MCF 10A (cell line): ENCODE measurements at regions of chr11 and their contacts with region 1.

Region 1: GRCh38 chr11:128506999-128507611 is 80.3 kb downstream of the ETS1 start:
- DNase-seq: peak; percentile 88
- H3K4me3 Mint-ChIP-seq: peak overlapping the region; percentile 64
- H3K27ac Mint-ChIP-seq: peak overlapping the region; percentile 89
- H3K4me1 Mint-ChIP-seq: peaks cover 69% of the 10 kb centered on the region
- H3K27me3 Mint-ChIP-seq: no peaks in the 10 kb centered on the region
- CTCF ChIP-seq: no peak

Region 2: DNA sequence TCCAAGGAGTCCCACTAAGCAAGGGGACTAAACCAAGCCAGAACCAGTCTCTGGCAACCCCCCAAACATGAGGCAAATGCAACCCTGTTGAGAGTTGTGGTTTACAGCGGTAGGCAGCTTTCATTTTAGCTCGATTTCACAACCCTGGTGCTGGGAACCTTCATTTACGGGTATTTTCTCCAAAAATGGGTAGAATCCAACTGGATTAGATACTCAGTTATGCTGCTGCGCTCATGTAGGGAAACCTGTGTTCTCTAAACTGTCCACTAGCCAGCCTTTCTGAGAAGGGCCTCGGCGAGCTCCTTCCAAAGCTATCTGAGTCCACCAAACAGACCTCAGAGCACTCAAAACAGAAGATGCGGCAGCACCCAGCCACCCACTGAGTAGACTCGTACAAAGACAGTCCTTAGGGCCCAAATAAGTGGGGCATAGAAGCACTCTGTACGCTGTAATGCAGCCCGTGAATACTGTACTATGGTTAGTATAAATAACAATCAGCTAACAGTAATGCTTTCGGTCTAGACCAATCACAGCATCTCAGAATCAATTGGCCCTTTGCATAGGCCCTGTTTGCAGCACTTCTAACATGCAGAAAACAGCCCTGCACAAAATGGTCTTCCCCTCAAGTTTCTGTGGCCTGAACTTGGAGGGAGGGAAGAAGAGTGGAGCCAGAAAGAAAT is 24.5 kb before region 1 on chr11:
- CTCF ChIA-PET with region 1: interaction called, 21 read pairs
- POLR2A ChIA-PET with region 1: interaction called, 5 read pairs
- intact Hi-C with region 1: no loop called
- DNase-seq: peak; percentile 78
- H3K4me3 Mint-ChIP-seq: peak overlapping the region; percentile 44
- H3K27ac Mint-ChIP-seq: peak overlapping the region; percentile 71
- H3K4me1 Mint-ChIP-seq: peaks cover 39% of the 10 kb centered on the region
- H3K27me3 Mint-ChIP-seq: no peaks in the 10 kb centered on the region
- CTCF ChIP-seq: no peak

Region 3: DNA sequence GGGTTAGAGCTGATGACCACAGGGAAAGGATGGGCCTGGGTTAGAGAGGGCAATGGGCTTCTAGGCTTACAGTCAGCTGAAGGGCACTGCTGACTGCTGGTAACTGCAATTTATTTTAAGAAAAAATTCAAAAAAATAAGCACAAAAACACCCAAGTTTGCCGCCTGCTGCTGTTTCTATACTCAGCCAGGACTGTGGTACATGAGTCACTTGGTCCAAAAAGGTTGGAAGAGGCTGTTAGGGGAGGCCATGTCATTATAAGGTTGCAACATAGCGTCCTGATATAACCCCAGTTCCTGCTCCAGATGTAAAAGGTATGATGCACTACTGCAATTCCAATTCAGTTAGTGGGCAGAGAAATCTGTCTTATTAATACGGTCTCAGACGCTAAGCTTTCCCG is 18.6 kb before region 1 on chr11:
- CTCF ChIA-PET with region 1: interaction called, 21 read pairs
- POLR2A ChIA-PET with region 1: interaction called, 14 read pairs
- intact Hi-C with region 1: no loop called
- DNase-seq: peak; percentile 92
- H3K4me3 Mint-ChIP-seq: no peak overlapping the region
- H3K27ac Mint-ChIP-seq: no peak overlapping the region
- H3K4me1 Mint-ChIP-seq: peaks cover 44% of the 10 kb centered on the region
- H3K27me3 Mint-ChIP-seq: no peaks in the 10 kb centered on the region
- CTCF ChIP-seq: no peak